ENCODE measurements at regions of chr10 and their contacts with region 1.

Region 1: GRCh38 chr10:110803830-110804338 is 67.8 kb upstream of the PDCD4 start:
- DNase-seq: peak; percentile 48
- ATAC-seq: peak; percentile 91
- H3K4me3 ChIP-seq: no peak overlapping the region
- H3K27ac ChIP-seq: no peak overlapping the region
- H3K4me1 ChIP-seq: no peaks in the 10 kb centered on the region; the same call in 1 of the 2 replicates
- H3K27me3 ChIP-seq: no peaks in the 10 kb centered on the region
- CTCF ChIP-seq: peak; percentile 65

Region 2: DNA sequence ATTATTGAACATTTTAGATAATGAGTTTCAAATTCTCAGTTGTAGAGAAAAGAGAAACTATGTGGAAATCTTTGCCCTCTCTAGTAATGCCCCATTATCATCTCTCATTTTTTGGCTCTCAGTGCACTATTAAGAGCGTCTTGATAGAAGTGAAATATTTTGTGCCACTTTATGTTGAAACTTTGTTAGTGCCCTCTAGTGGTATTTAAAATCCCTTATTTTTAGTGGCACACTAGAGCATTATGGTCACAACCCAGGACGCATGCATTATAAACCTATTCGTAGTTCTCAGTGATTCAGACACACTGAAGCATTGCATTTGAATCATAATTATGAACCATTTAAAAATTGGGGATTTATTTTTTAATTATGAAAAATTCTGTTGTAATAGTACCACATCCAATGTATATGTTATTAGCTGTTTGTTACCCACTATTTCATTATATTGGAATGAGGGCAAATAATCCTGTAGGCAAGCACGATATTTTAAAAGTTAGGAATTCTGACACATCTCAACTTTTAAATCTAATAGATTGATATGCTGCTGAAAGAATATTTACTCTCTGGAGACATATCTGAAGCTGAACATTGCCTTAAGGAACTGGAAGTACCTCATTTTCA is 89.8 kb after region 1 on chr10:
- CTCF ChIA-PET with region 1: interaction called, 3 read pairs
- POLR2A ChIA-PET with region 1: no interaction called
- intact Hi-C with region 1: loop called (anchors 2 kb)
- DNase-seq: peak; percentile 74
- ATAC-seq: peak; percentile 62
- H3K4me3 ChIP-seq: no peak overlapping the region
- H3K27ac ChIP-seq: no peak overlapping the region
- H3K4me1 ChIP-seq: 0 out of 2 replicates have a peak, but pooled peaks cover 5% of the 10 kb centered on the region
- H3K27me3 ChIP-seq: no peaks in the 10 kb centered on the region
- CTCF ChIP-seq: peak; percentile 65

Region 3: DNA sequence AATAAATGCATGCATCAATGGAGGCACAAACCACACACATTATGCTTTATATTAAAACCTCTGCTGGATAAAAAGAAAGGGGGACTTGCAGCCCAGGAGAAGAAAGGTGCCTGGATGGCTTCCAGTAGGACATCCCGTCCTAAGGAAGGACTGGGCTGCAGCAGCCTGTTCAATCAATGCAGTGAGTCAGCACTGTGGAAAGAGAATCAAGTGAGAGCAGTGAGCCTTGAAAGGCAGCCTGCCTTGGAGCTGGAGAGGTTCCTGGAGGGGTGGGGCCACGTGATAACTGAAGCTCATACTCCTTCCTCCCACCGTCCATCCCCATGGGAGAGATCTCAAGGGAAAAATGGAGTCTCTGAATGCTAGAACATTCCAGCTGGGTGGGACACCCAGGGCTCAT is 774.2 kb after region 1 on chr10:
- CTCF ChIA-PET with region 1: no interaction called
- POLR2A ChIA-PET with region 1: no interaction called
- intact Hi-C with region 1: no loop called
- DNase-seq: no peak
- ATAC-seq: no peak
- H3K4me3 ChIP-seq: no peak overlapping the region
- H3K27ac ChIP-seq: no peak overlapping the region
- H3K4me1 ChIP-seq: no peaks in the 10 kb centered on the region
- H3K27me3 ChIP-seq: no peaks in the 10 kb centered on the region
- CTCF ChIP-seq: no peak